Calu3 (cell line): ENCODE measurements at regions of chr11 and their contacts with region 1.

Region 1: GRCh38 chr11:128172046-128172878 is 415.1 kb downstream of the ETS1 start:
- DNase-seq: peak; percentile 77
- H3K4me3 Mint-ChIP-seq: no peak overlapping the region
- H3K27ac Mint-ChIP-seq: peak overlapping the region; percentile 47
- H3K4me1 Mint-ChIP-seq: peaks cover 31% of the 10 kb centered on the region
- H3K27me3 Mint-ChIP-seq: no peaks in the 10 kb centered on the region
- CTCF ChIP-seq: peak; percentile 57

Region 2: DNA sequence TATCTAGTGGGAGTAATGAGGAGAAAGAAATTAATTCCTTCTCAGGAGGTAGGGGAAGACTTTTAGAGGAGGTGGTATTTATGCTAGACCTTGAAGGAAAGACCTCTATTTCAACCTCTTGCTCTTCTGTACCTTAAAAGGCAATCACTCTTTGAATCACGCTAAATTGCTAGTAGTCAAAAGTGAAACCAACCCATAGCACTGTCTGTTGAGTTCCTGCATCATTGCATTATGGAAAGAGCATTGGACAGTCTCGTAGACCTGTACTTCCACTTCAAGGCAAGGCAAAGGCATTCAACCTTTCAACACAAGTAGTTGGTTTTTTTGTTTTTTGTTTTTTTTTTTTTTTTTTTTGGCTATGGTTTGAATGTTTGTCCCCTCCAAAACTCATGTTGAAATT is 355.3 kb before region 1 on chr11:
- CTCF ChIA-PET with region 1: no interaction called
- intact Hi-C with region 1: no loop called
- DNase-seq: no peak
- H3K4me3 Mint-ChIP-seq: no peak overlapping the region
- H3K27ac Mint-ChIP-seq: no peak overlapping the region
- H3K4me1 Mint-ChIP-seq: no peaks in the 10 kb centered on the region
- H3K27me3 Mint-ChIP-seq: no peaks in the 10 kb centered on the region
- CTCF ChIP-seq: no peak

Region 3: GRCh38 chr11:128157423-128158298 is 14.6 kb before region 1 on chr11:
- CTCF ChIA-PET with region 1: interaction called, 10 read pairs
- intact Hi-C with region 1: no loop called
- DNase-seq: peak; percentile 57
- H3K4me3 Mint-ChIP-seq: no peak overlapping the region
- H3K27ac Mint-ChIP-seq: no peak overlapping the region
- H3K4me1 Mint-ChIP-seq: no peaks in the 10 kb centered on the region
- H3K27me3 Mint-ChIP-seq: no peaks in the 10 kb centered on the region
- CTCF ChIP-seq: peak; percentile 79

Region 4: GRCh38 chr11:128290106-128290840 is 118.0 kb after region 1 on chr11:
- CTCF ChIA-PET with region 1: interaction called, 8 read pairs
- intact Hi-C with region 1: loop called (anchors 2 kb)
- DNase-seq: peak; percentile 58
- H3K4me3 Mint-ChIP-seq: peak overlapping the region; percentile 30
- H3K27ac Mint-ChIP-seq: peak overlapping the region; percentile 82
- H3K4me1 Mint-ChIP-seq: peaks cover 30% of the 10 kb centered on the region
- H3K27me3 Mint-ChIP-seq: no peaks in the 10 kb centered on the region
- CTCF ChIP-seq: peak; percentile 35

Region 5: DNA sequence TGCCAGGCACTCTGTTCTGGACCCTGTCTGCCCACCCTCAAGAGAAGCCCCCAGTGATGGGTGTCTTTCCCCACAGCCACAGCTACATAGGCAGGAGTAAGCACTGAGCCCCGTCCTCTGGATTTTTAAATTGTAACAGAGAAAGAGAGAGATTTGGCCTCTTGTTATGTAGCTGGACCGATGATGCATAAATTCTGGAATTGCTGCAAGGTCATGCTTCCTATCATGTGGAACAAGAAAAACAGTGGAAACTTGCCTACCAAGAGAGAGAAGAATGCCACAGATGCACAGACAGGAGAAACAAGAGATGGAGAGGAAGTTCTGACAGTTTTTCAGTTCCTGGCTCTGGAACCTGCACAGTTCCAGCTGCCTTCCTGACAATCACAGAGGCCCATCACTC is 264.9 kb after region 1 on chr11:
- CTCF ChIA-PET with region 1: no interaction called
- intact Hi-C with region 1: no loop called
- DNase-seq: no peak
- H3K4me3 Mint-ChIP-seq: no peak overlapping the region
- H3K27ac Mint-ChIP-seq: no peak overlapping the region
- H3K4me1 Mint-ChIP-seq: no peaks in the 10 kb centered on the region
- H3K27me3 Mint-ChIP-seq: no peaks in the 10 kb centered on the region
- CTCF ChIP-seq: no peak

Region 6: GRCh38 chr11:128472128-128473089 is 300.1 kb after region 1 on chr11:
- CTCF ChIA-PET with region 1: no interaction called
- intact Hi-C with region 1: loop called (anchors 10 kb)
- DNase-seq: no peak
- H3K4me3 Mint-ChIP-seq: no peak overlapping the region
- H3K27ac Mint-ChIP-seq: no peak overlapping the region
- H3K4me1 Mint-ChIP-seq: peaks cover 59% of the 10 kb centered on the region
- H3K27me3 Mint-ChIP-seq: no peaks in the 10 kb centered on the region
- CTCF ChIP-seq: no peak

Region 7: GRCh38 chr11:128630367-128631230 is 458.3 kb after region 1 on chr11:
- CTCF ChIA-PET with region 1: interaction called, 13 read pairs
- intact Hi-C with region 1: loop called (anchors 1 kb)
- DNase-seq: peak; percentile 81
- H3K4me3 Mint-ChIP-seq: no peak overlapping the region
- H3K27ac Mint-ChIP-seq: no peak overlapping the region
- H3K4me1 Mint-ChIP-seq: no peaks in the 10 kb centered on the region
- H3K27me3 Mint-ChIP-seq: no peaks in the 10 kb centered on the region
- CTCF ChIP-seq: peak; percentile 44